Right lobe of liver (tissue), 6 donors: ENCODE measurements at regions of chr14 and their contacts with region 1.

Region 1: DNA sequence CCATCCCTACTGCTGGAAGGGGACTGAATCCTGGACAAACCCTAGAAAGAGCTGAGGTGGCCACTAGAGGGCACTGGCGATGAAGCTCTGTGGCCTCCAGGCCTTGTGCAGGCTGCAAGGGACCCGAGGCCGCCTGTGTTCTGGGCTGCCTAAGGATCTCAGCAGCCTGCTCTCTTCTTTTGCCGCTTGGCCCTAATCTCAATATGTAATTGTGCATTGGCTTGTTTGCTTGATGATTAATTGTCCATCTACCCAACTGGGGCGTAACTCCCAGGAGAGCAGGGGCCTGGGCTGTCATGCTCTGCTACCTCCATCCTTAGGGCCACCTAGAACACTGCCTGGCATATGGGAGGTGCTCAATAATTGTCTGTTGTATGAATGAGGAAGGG is 73.8 kb downstream of the SYNE3 start:
- DNase-seq: peak; percentile 83 to 87 (median 86)
- ATAC-seq: peak; percentile 86 to 94 (median 90)
- H3K4me3 ChIP-seq: no peak overlapping the region
- H3K27ac ChIP-seq: peak overlapping the region in 2 of 3 donors; percentile 78 to 91
- H3K4me1 ChIP-seq: peaks cover 0 to 31% (median 14%) of the 10 kb centered on the region in 4 donors
- H3K27me3 ChIP-seq: no peaks in the 10 kb centered on the region
- CTCF ChIP-seq: peak; percentile 86 to 88 (median 88)
- POLR2A ChIP-seq: no peak

Region 2: GRCh38 chr14:95527387-95528002 is 84.9 kb after region 1 on chr14:
- intact Hi-C with region 1: loop called (anchors 5 to 10 kb)
- DNase-seq: peak in 1 of 3 donors; percentile 58
- ATAC-seq: peak in 2 of 4 donors; percentile 30 to 32
- H3K4me3 ChIP-seq: no peak overlapping the region
- H3K27ac ChIP-seq: peak overlapping the region; percentile 6 to 77 (median 60)
- H3K4me1 ChIP-seq: peaks cover 0 to 73% (median 33%) of the 10 kb centered on the region in 4 donors
- H3K27me3 ChIP-seq: no peaks in the 10 kb centered on the region
- CTCF ChIP-seq: peak; percentile 82 to 91 (median 88)
- POLR2A ChIP-seq: no peak